CD8-positive, alpha-beta T cell (primary cell): ENCODE measurements at regions of chr7 and their contacts with region 1.

Region 1: GRCh38 chr7:105876091-105876963 is at the start of gene ATXN7L1:
- DNase-seq: peak; percentile 81 to 94 (median 89)
- ATAC-seq: peak; percentile 94
- H3K4me3 ChIP-seq: peak within 1 kb of the TSS; percentile 76 to 98
- H3K4me3 Mint-ChIP-seq: peak within 1 kb of the TSS; percentile 97
- H3K27ac ChIP-seq: peak within 1 kb of the TSS; percentile 53 to 78
- H3K27ac Mint-ChIP-seq: peak within 1 kb of the TSS; percentile 96
- H3K4me1 ChIP-seq: peaks cover 37% of the 10 kb centered on the region
- H3K4me1 Mint-ChIP-seq: peaks cover 61% of the 10 kb centered on the region
- H3K27me3 ChIP-seq: no peaks in the 10 kb centered on the region
- H3K27me3 Mint-ChIP-seq: no peaks in the 10 kb centered on the region
- CTCF ChIP-seq: peak; percentile 29
- total RNA-seq, gene ATXN7L1: 17.0 to 18.5 TPM

Region 2: GRCh38 chr7:105691733-105692564 is 184.4 kb before region 1 on chr7:
- CTCF ChIA-PET with region 1: no interaction called
- POLR2A ChIA-PET with region 1: interaction called, 4 read pairs
- intact Hi-C with region 1: loop called (anchors 2 to 5 kb)
- DNase-seq: peak; percentile 45 to 91 (median 71)
- ATAC-seq: peak; percentile 75
- H3K4me3 ChIP-seq: peak overlapping the region; percentile 69 to 72
- H3K4me3 Mint-ChIP-seq: peak overlapping the region; percentile 93
- H3K27ac ChIP-seq: peak overlapping the region; percentile 85 to 96
- H3K27ac Mint-ChIP-seq: peak overlapping the region; percentile 98
- H3K4me1 ChIP-seq: peaks cover 34% of the 10 kb centered on the region
- H3K4me1 Mint-ChIP-seq: peaks cover 64% of the 10 kb centered on the region
- H3K27me3 ChIP-seq: no peaks in the 10 kb centered on the region
- H3K27me3 Mint-ChIP-seq: no peaks in the 10 kb centered on the region
- CTCF ChIP-seq: no peak

Region 3: GRCh38 chr7:105857009-105857952 is 19.0 kb before region 1 on chr7:
- CTCF ChIA-PET with region 1: interaction called, 14 read pairs
- POLR2A ChIA-PET with region 1: interaction called, 5 read pairs
- intact Hi-C with region 1: loop called in 1 of 2 experiments (anchors 2 kb)
- DNase-seq: peak in 3 of 9 experiments; percentile 29 to 59 (median 45)
- ATAC-seq: peak; percentile 77
- H3K4me3 ChIP-seq: no peak overlapping the region
- H3K4me3 Mint-ChIP-seq: peak overlapping the region; percentile 33
- H3K27ac ChIP-seq: no peak overlapping the region
- H3K27ac Mint-ChIP-seq: peak overlapping the region; percentile 80
- H3K4me1 ChIP-seq: peaks cover 23% of the 10 kb centered on the region
- H3K4me1 Mint-ChIP-seq: peaks cover 45% of the 10 kb centered on the region
- H3K27me3 ChIP-seq: no peaks in the 10 kb centered on the region
- H3K27me3 Mint-ChIP-seq: no peaks in the 10 kb centered on the region
- CTCF ChIP-seq: no peak

Region 4: GRCh38 chr7:105924945-105925344 is 48.6 kb after region 1 on chr7:
- CTCF ChIA-PET with region 1: interaction called, 3 read pairs
- POLR2A ChIA-PET with region 1: interaction called, 10 read pairs
- intact Hi-C with region 1: loop called (anchors 2 to 5 kb)
- DNase-seq: peak in 3 of 9 experiments; percentile 16 to 73 (median 51)
- ATAC-seq: peak; percentile 86
- H3K4me3 ChIP-seq: no peak overlapping the region
- H3K4me3 Mint-ChIP-seq: peak overlapping the region; percentile 38
- H3K27ac ChIP-seq: peak overlapping the region in 1 of 2 experiments; percentile 40
- H3K27ac Mint-ChIP-seq: peak overlapping the region; percentile 78
- H3K4me1 ChIP-seq: peaks cover 21% of the 10 kb centered on the region
- H3K4me1 Mint-ChIP-seq: peaks cover 35% of the 10 kb centered on the region
- H3K27me3 ChIP-seq: no peaks in the 10 kb centered on the region
- H3K27me3 Mint-ChIP-seq: no peaks in the 10 kb centered on the region
- CTCF ChIP-seq: no peak

Region 5: DNA sequence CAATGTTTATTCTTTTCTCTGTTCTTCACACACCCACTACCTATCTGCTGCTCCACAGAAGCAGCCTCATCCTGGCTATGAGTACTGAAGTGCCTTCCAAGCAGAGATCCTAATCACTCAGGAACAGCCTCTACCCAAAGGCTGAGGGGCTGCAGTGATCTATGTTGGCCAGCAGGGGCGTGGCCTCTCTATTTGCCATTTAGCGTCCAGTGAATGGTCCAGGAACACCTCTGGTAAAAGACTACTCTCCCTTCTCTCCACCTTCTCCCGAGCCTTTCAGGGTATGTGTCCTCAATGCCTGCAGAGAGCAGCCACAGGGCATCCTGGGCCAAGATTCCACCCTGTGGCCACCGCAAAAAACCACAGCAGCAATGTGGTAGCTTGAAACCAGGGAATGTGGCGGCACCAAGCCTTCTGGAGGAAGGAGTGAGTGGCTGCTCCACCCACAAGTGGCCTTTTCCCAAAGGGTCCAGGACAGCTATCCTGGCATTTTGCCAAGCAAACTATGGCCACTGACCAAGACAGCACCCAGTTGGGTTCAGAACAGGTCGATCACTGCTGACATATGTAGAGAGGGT is 164.9 kb after region 1 on chr7:
- CTCF ChIA-PET with region 1: interaction called, 10 read pairs
- POLR2A ChIA-PET with region 1: no interaction called
- intact Hi-C with region 1: loop called (anchors 2 kb)
- DNase-seq: peak in 3 of 9 experiments; percentile 40 to 59 (median 51)
- ATAC-seq: peak; percentile 32
- H3K4me3 ChIP-seq: no peak overlapping the region
- H3K4me3 Mint-ChIP-seq: peak overlapping the region; percentile 6
- H3K27ac ChIP-seq: no peak overlapping the region
- H3K27ac Mint-ChIP-seq: peak overlapping the region; percentile 68
- H3K4me1 ChIP-seq: peaks cover 28% of the 10 kb centered on the region
- H3K4me1 Mint-ChIP-seq: peaks cover 39% of the 10 kb centered on the region
- H3K27me3 ChIP-seq: no peaks in the 10 kb centered on the region
- H3K27me3 Mint-ChIP-seq: no peaks in the 10 kb centered on the region
- CTCF ChIP-seq: peak; percentile 61